ENCODE measurements at regions of chr4 and their contacts with region 1.

Region 1: GRCh38 chr4:30094887-30095286 is 625.3 kb upstream of the PCDH7 start:
- DNase-seq: peak; percentile 51
- H3K4me3 Mint-ChIP-seq: no peak overlapping the region
- H3K27ac Mint-ChIP-seq: no peak overlapping the region
- H3K4me1 Mint-ChIP-seq: peaks cover 5% of the 10 kb centered on the region
- H3K27me3 Mint-ChIP-seq: no peaks in the 10 kb centered on the region
- CTCF ChIP-seq: no peak

Region 2: DNA sequence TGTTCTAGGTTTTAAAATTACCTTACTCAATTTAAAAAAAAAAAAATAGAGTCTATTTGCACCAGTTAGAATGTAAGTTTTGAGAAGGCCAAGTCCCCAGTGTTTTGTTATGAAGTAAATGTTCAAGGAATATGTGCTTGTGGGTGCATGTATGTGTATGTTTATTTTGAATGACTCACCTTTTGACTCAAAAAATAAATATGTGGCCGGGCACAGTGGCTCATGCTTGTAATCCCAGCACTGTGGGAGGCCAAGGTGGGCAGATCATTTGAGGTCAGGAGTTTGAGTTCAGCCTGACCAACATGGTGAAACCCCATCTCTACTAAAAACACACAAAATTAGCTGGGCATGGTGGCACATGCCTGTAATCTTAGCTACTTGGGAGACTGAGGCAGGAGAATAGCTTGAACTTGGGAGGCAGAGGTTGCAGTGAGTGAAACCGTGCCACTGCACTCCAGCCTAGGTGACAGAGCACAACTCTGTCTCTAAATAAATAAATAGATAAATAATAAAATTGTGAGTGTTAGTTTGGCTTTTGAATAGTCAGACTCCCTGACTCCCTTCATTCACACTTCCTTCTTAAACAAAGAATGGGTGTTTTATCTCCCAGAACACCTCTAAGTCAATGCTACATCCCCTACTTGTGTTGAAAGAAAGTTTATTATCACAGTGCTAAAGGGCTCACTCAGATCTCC is 114.0 kb after region 1 on chr4:
- CTCF ChIA-PET with region 1: no interaction called
- POLR2A ChIA-PET with region 1: interaction called, 3 read pairs
- intact Hi-C with region 1: loop called (anchors 5 kb)
- DNase-seq: peak; percentile 85
- H3K4me3 Mint-ChIP-seq: no peak overlapping the region
- H3K27ac Mint-ChIP-seq: peak overlapping the region; percentile 80
- H3K4me1 Mint-ChIP-seq: peaks cover 18% of the 10 kb centered on the region
- H3K27me3 Mint-ChIP-seq: no peaks in the 10 kb centered on the region
- CTCF ChIP-seq: no peak

Measured in MCF 10A (cell line).